Activated B cell treated with CpG ODN at 0.5 μM for 24 hours (primary cell): ENCODE measurements at regions of chr19 and their contacts with region 1.

Region 1: GRCh38 chr19:50461066-50461875 is 15.0 kb upstream of the EMC10 start:
- DNase-seq: peak; percentile 61
- ATAC-seq: peak; percentile 65
- H3K4me3 Mint-ChIP-seq: peak overlapping the region; percentile 44
- H3K27ac Mint-ChIP-seq: peak overlapping the region; percentile 90
- H3K4me1 Mint-ChIP-seq: peaks cover 24% of the 10 kb centered on the region
- H3K27me3 Mint-ChIP-seq: no peaks in the 10 kb centered on the region
- CTCF ChIP-seq: peak; percentile 29

Region 2: DNA sequence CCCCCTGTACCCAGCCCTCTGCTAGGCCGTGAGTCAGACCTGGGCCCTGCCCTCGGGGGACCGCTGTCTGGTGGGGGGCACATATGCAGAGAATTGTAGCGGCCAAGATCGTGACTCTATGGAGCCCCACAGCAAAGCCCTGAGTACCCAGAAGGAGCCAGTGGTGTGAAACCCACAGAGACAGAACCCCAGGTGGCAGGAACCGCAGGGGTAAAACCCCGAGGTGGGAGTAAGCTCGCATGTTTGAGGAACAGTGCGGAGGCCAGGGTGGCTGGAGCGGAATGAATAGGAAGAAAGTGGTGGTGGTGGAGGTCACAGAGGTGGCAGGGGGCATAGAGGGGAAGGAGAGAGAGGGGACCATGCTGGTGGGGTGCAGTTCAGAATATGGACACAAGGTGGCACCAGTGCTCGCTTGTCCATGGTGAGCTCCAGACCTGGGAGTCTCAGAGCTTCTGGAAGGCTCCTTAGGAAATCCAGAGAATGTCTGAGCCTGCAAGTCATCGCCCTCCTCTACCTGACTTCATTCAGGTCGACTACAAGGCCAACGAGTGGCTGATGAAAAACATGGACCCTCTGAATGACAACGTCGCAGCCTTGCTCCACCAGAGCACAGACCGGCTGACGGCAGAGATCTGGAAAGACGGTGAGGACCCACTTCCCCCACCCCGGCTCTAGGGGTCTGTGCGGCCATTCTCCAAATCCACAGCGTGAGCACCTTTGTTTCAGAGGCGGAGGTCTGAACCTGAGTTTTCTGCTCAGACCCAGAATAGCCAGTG is 209.0 kb before region 1 on chr19:
- CTCF ChIA-PET with region 1: interaction called, 7 read pairs
- POLR2A ChIA-PET with region 1: interaction called, 3 read pairs
- intact Hi-C with region 1: loop called (anchors 1 kb)
- DNase-seq: peak; percentile 40
- ATAC-seq: peak; percentile 64
- H3K4me3 Mint-ChIP-seq: no peak overlapping the region
- H3K27ac Mint-ChIP-seq: no peak overlapping the region
- H3K4me1 Mint-ChIP-seq: peaks cover 5% of the 10 kb centered on the region
- H3K27me3 Mint-ChIP-seq: peaks cover 15% of the 10 kb centered on the region
- CTCF ChIP-seq: no peak

Region 3: DNA sequence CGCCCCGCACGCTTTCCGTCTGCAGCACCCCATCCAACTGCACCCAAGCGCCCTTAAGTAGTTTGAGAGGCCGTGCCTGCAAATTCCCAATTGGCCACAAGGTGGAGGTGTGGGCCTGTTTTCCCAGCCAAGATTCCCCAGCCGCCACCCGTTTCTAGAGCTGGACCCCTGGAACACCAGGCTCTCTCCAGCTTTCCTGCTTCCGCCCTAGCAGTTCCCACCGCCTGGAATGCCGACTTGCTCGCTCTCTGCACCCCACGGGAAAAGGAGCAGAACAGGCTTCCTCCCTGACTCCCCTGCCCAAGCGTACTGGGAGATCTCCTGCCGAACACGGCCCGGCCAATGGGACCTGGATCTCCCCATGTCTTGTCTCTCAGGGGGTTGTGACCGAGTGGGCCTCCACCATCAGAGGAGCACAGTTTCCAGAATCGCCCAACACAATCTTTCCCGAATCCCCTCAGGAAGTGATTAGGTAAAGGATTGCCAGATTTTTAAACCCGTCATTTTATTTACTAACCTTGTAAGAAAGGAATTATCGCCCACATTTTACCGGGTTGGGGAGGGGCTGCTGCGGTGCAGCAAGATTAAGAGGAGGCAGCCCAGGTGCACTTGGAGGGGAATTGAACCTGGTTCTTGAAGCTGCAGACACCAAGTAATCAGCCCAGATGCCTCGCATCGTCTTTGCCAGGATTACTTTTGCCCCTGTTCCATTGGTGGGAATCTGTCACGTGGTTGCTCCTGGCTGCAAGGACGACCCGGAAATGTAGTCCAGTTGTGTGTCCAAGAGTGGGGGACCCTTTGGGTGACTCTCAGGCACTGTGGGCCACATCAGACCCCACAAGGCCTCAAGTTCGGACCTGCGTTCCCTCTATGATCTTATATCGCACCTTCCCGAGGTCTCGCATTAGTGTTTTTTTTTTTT is 92.4 kb before region 1 on chr19:
- CTCF ChIA-PET with region 1: interaction called, 92 read pairs
- POLR2A ChIA-PET with region 1: interaction called, 15 read pairs
- intact Hi-C with region 1: loop called (anchors 1 kb)
- DNase-seq: peak; percentile 78
- ATAC-seq: peak; percentile 79
- H3K4me3 Mint-ChIP-seq: peak overlapping the region; percentile 90
- H3K27ac Mint-ChIP-seq: peak overlapping the region; percentile 87
- H3K4me1 Mint-ChIP-seq: peaks cover 39% of the 10 kb centered on the region
- H3K27me3 Mint-ChIP-seq: no peaks in the 10 kb centered on the region
- CTCF ChIP-seq: no peak

Region 4: GRCh38 chr19:50383852-50384684 is 77.2 kb before region 1 on chr19 and contains the start of gene POLD1:
- CTCF ChIA-PET with region 1: no interaction called
- POLR2A ChIA-PET with region 1: interaction called, 15 read pairs
- intact Hi-C with region 1: no loop called
- DNase-seq: peak; percentile 97
- ATAC-seq: peak; percentile 94
- H3K4me3 Mint-ChIP-seq: peak within 1 kb of the TSS; percentile 96
- H3K27ac Mint-ChIP-seq: peak within 1 kb of the TSS; percentile 85
- H3K4me1 Mint-ChIP-seq: peaks cover 28% of the 10 kb centered on the region
- H3K27me3 Mint-ChIP-seq: no peaks in the 10 kb centered on the region
- CTCF ChIP-seq: no peak
- total RNA-seq, gene POLD1: 58.8 and 65.5 TPM in 2 replicates

Region 5: GRCh38 chr19:50431343-50432220 is 29.7 kb before region 1 on chr19:
- CTCF ChIA-PET with region 1: interaction called, 5 read pairs
- POLR2A ChIA-PET with region 1: interaction called, 25 read pairs
- intact Hi-C with region 1: loop called (anchors 1 kb)
- DNase-seq: peak; percentile 91
- ATAC-seq: peak; percentile 64
- H3K4me3 Mint-ChIP-seq: peak overlapping the region; percentile 89
- H3K27ac Mint-ChIP-seq: peak overlapping the region; percentile 95
- H3K4me1 Mint-ChIP-seq: peaks cover 95% of the 10 kb centered on the region
- H3K27me3 Mint-ChIP-seq: no peaks in the 10 kb centered on the region
- CTCF ChIP-seq: no peak

Region 6: GRCh38 chr19:50476224-50476942 is 15.1 kb after region 1 on chr19 and contains the starts of genes EMC10 and GARIN5A:
- CTCF ChIA-PET with region 1: interaction called, 3 read pairs
- POLR2A ChIA-PET with region 1: interaction called, 3 read pairs
- intact Hi-C with region 1: loop called (anchors 1 kb)
- DNase-seq: peak; percentile 95
- ATAC-seq: peak; percentile 95
- H3K4me3 Mint-ChIP-seq: peak within 1 kb of the TSS; percentile 93
- H3K27ac Mint-ChIP-seq: peak within 1 kb of the TSS; percentile 85
- H3K4me1 Mint-ChIP-seq: peaks cover 23% of the 10 kb centered on the region
- H3K27me3 Mint-ChIP-seq: no peaks in the 10 kb centered on the region
- CTCF ChIP-seq: no peak
- total RNA-seq, gene EMC10: 70.8 and 72.1 TPM in 2 replicates
- total RNA-seq, gene GARIN5A: 0.29 and 0.67 TPM in 2 replicates

Region 7: DNA sequence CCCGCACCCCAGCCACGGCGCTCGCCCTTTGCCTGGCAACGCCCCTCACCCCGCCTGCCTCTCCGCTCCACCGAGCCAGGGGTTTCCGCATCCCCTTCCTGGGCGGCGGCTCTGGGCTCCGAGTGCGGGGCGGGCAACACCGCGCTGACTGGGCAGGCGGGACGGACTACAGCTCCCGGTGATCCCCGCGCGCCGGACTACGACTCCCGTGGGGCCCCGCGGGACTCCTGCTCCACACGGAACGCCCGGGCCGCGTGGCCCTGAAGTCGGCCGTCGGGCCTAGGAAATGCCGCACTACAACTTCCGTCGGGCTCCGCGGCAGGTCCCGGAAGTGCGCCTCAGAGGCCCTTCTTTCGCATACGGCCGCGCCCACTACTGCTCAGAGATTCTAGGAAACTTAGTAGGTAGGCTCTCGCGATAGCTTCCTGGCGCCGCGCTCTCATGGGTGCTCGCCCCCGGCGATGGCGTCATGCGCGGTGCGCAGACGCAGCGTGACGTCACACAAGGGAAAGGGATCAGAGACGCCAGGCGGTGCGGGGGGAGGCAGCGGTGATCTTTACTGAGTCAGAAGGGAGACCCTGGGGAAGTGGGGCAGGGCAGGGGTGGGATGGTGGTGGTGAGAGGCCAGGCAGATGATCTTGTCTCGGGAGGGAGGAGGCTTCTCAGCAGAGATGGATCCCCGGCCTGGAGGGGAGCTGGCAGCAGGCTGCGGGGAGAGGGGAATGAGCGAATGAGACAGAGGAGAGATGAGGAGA is 50.0 kb after region 1 on chr19 and contains the start of gene JOSD2:
- CTCF ChIA-PET with region 1: interaction called, 4 read pairs
- POLR2A ChIA-PET with region 1: interaction called, 8 read pairs
- intact Hi-C with region 1: loop called (anchors 1 kb)
- DNase-seq: peak; percentile 96
- ATAC-seq: peak; percentile 94
- H3K4me3 Mint-ChIP-seq: peak within 1 kb of the TSS; percentile 89
- H3K27ac Mint-ChIP-seq: peak within 1 kb of the TSS; percentile 93
- H3K4me1 Mint-ChIP-seq: peaks cover 13% of the 10 kb centered on the region
- H3K27me3 Mint-ChIP-seq: peaks cover 5% of the 10 kb centered on the region
- CTCF ChIP-seq: no peak
- total RNA-seq, gene JOSD2: 21.0 and 23.7 TPM in 2 replicates